ENCODE measurements at regions of chr17 and their contacts with region 1.

Region 1: DNA sequence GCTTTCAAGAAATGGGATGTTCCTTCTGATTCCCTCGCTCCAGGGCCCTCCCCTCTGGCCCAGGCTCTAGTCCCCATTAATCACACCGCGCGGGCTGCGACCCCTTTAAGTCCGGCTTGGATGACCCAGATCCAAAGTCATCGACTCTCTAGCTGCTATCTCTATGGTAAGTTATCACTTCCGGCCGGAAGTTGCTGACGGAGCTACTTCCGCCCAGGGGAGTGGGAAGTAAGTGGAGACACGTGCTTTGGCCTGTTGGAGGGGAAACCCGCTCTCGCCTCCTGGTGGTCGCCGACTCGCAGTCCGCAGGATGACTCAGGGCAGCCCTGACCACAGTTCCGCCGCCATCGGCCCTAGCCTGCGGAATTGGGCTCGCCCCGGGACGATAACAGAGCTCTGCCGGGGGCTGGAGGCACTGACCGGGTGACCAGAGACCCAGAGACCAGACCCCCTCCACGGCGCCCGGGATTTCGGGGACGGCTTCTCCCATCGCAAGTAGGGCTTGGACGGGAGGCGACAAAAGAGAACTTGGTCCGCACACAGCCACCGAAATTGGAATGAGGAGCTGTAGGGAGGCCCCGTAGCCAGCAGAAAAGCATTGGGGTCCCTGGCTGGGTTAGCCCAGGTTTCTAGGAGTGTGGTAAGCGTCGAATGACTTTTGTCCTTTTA is 52.2 kb upstream of the SEC14L1 start:
- DNase-seq: peak; percentile 100
- H3K4me3 ChIP-seq: peak overlapping the region; percentile 83
- H3K27ac ChIP-seq: peak overlapping the region; percentile 73
- H3K4me1 ChIP-seq: peaks cover 60% of the 10 kb centered on the region
- CTCF ChIP-seq: peak; percentile 81

Region 2: DNA sequence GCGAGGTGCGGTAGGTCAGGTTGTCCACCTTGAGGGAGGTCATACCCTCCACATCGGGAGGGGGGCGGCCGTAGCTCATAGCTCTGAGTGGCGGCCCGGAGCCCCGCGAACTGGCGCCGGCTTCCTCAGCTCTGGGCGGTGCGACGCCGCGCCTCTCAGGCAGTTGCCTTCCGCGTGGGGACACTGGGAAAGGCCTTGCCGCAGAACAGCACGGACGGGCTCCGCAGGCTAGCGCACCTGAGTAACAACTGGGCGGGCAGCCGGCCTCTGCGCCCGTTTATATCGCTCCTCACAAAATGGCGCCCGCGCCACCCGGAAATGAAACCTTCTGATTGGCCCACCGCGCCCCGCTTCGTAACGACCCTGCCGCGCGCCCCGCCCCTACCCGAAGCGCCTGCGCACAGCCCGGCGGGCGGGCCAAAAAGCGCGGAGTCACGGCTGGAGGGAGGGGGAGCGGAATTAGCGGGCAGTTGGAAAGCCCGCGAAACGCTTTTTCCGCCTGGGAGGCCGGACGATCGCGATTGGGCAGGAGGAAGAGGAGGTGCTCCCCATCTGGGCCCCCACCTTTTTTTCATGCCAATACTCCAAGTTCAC is 351.4 kb before region 1 on chr17 and contains the start of gene SRSF2:
- CTCF ChIA-PET with region 1: no interaction called
- POLR2A ChIA-PET with region 1: no interaction called
- intact Hi-C with region 1: loop called (anchors 5 kb)
- DNase-seq: peak; percentile 100
- H3K4me3 ChIP-seq: peak within 1 kb of the TSS; percentile 77
- H3K27ac ChIP-seq: peak within 1 kb of the TSS; percentile 92
- H3K4me1 ChIP-seq: peaks cover 53% of the 10 kb centered on the region
- CTCF ChIP-seq: no peak
- total RNA-seq, gene SRSF2: 1,143 and 2,207 TPM in 2 replicates

Region 3: GRCh38 chr17:77116371-77116860 is 27.8 kb after region 1 on chr17:
- CTCF ChIA-PET with region 1: no interaction called
- POLR2A ChIA-PET with region 1: no interaction called
- intact Hi-C with region 1: no loop called
- DNase-seq: no peak
- H3K4me3 ChIP-seq: no peak overlapping the region
- H3K27ac ChIP-seq: no peak overlapping the region
- H3K4me1 ChIP-seq: no peaks in the 10 kb centered on the region
- CTCF ChIP-seq: no peak

Region 4: DNA sequence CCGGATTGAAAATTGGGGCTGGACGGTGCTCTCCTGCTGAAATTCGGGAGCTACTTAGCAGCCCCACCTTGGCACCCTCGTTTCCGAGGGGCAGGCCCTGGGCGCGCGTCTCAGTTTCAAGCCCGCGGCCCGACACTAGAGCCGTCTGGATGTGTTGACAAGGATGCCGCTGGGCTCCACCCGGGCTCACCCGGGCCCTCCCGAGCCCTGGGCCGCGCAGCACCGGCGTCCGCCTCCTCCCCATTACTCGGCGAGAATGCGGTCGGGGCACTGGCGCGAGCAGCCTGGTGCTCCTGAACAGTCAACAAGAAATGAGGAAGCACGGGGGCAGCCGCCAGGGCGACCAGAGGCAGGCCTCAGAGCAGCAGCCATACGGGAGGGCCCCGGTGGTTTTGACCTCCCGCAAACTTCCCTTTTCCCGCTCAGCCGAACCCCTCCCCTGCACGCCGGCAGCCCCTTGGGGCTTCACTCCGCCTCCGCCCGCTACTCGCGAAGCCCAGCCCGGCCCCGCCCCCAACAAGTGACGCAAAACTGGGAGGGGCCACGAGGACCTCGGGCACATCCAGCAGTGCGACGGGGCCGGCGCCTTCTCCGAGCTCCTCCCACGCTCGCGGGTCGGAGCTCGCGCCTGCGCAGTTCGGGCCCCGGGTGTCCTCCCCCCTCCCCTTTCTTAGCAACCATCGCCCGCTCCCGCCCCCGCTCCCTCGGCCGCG is 51.7 kb after region 1 on chr17:
- CTCF ChIA-PET with region 1: interaction called, 4 read pairs
- POLR2A ChIA-PET with region 1: interaction called, 14 read pairs
- intact Hi-C with region 1: loop called (anchors 2 kb)
- DNase-seq: peak; percentile 100
- H3K4me3 ChIP-seq: peak overlapping the region; percentile 93
- H3K27ac ChIP-seq: peak overlapping the region; percentile 86
- H3K4me1 ChIP-seq: peaks cover 37% of the 10 kb centered on the region
- CTCF ChIP-seq: no peak

Region 5: DNA sequence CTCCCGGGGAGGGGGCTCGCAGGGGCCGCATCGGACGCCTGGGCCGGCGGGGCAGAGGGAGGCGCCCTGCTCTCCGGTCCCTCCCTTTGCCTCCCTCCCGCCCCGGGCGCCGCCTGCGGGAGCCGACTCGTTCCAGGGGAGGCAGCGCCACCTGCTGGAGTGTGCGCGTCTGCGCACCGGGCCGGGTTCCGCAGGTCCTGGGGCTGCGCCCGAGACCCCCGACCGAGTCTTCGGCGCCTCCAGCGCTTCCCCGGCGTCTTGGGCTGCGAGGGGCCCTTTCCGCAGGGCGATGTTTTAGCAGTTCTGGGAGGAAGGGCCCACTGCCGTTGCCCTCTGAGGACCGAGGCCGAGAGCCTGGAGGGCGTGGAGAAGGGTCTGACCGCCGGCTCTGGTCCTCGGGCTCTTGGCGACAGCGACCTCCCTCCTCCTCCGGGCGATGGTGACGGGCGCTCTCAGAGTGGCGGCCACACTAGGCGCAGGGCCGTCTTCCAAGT is 158.5 kb after region 1 on chr17:
- CTCF ChIA-PET with region 1: no interaction called
- POLR2A ChIA-PET with region 1: interaction called, 3 read pairs
- intact Hi-C with region 1: loop called (anchors 1 kb)
- DNase-seq: peak; percentile 91
- H3K4me3 ChIP-seq: peak overlapping the region; percentile 61
- H3K27ac ChIP-seq: no peak overlapping the region
- H3K4me1 ChIP-seq: peaks cover 14% of the 10 kb centered on the region
- CTCF ChIP-seq: peak; percentile 94

Region 6: GRCh38 chr17:77325577-77326075 is 237.0 kb after region 1 on chr17:
- CTCF ChIA-PET with region 1: no interaction called
- POLR2A ChIA-PET with region 1: no interaction called
- intact Hi-C with region 1: loop called (anchors 5 kb)
- DNase-seq: peak; percentile 45
- H3K4me3 ChIP-seq: peak overlapping the region; percentile 68
- H3K27ac ChIP-seq: peak overlapping the region; percentile 85
- H3K4me1 ChIP-seq: peaks cover 98% of the 10 kb centered on the region
- CTCF ChIP-seq: peak; percentile 12; the same call in 1 of the 2 replicates

Region 7: GRCh38 chr17:77724876-77725615 is 636.5 kb after region 1 on chr17:
- CTCF ChIA-PET with region 1: no interaction called
- POLR2A ChIA-PET with region 1: no interaction called
- intact Hi-C with region 1: loop called (anchors 10 kb)
- DNase-seq: peak; percentile 78
- H3K4me3 ChIP-seq: no peak overlapping the region
- H3K27ac ChIP-seq: no peak overlapping the region
- H3K4me1 ChIP-seq: peaks cover 18% of the 10 kb centered on the region
- CTCF ChIP-seq: no peak